ENCODE measurements at regions of chr4 and their contacts with region 1.

Region 1: DNA sequence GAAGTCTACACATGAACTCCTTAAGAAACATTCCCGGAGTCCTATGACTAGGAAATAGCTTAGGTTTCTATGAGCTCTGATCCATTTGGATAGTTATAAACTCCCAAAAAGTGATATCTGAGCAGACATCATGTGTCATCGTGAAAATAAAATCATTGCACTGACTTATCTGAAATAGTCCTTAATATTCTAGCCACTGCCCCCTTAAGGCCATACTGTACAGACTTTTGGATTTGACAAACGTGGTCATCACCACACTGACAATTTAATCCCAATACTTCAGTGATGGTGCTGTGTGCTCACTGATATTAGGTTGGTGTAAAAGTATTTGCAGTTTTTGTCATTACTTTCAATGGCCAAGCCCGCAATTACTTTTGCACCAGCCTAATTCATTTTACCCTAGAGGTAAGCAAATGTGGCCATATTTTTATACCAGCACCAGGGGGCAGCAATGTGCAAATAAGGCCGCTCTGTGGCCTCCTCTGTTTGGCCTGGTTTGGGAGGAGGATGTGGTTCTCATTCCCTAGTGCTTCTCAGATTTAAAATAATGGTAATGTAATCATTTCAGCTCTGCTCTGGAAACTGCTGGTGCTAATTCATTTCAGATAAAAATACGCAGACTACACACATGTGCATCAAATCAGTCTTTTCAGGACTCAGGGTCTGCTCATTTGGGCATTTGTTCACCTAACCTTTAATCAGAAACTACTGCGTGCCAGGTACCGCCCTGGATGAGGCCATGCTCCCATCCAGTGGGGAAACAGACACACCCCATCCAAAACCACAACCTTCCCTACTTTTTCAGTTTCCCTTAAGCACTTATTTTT is 196.4 kb upstream of the C1QTNF7 start:
- DNase-seq: no peak
- H3K4me3 ChIP-seq: no peak overlapping the region
- H3K27ac ChIP-seq: peak overlapping the region; percentile 22
- H3K4me1 ChIP-seq: peaks cover 42% of the 10 kb centered on the region
- H3K27me3 ChIP-seq: no peaks in the 10 kb centered on the region
- CTCF ChIP-seq: peak; percentile 44 to 78 (median 66)
- POLR2A ChIP-seq: no peak

Region 2: GRCh38 chr4:15132739-15133138 is 98.7 kb before region 1 on chr4:
- intact Hi-C with region 1: no loop called
- DNase-seq: no peak
- H3K4me3 ChIP-seq: no peak overlapping the region
- H3K27ac ChIP-seq: no peak overlapping the region
- H3K4me1 ChIP-seq: no peaks in the 10 kb centered on the region
- H3K27me3 ChIP-seq: no peaks in the 10 kb centered on the region
- CTCF ChIP-seq: no peak
- POLR2A ChIP-seq: no peak

Region 3: DNA sequence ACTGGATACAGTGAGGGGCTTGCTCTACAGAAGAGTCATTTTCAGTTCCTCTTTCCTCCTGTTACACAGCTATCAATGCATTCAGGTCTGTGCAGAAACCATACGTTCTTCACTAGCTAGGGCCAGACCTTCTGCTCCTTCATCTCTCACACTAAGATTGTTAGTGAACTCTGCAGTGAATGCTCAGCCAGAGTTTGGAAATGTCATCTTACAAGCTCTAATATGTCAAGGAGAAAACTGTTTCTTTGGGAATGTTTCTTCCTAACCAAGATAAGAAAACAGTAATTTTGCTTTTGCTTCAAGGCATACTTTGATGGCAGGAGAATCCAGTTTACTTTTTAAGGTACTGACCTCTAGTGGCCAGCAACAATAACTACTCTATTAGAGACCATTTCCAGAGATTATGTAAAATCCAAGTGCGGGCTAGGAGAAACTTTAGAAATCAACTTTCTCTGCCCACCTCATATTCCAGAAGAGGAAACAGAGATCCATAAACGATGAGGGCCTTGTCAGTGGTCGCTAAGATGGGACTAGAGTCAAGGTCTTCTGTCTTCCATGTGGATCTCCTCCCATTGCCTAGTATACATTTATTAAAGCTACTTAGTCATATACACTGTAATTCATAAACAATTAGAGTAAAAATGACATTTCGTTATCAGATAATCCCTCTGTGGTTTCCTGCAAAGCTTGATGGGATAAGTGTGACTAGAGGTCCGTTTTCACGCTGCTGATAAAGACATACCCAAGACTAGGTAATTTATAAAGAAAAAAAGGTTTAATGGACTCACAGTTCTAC is 226.1 kb after region 1 on chr4:
- intact Hi-C with region 1: loop called (anchors 2 kb)
- DNase-seq: no peak
- H3K4me3 ChIP-seq: no peak overlapping the region
- H3K27ac ChIP-seq: peak overlapping the region; percentile 65
- H3K4me1 ChIP-seq: peaks cover 29% of the 10 kb centered on the region
- H3K27me3 ChIP-seq: no peaks in the 10 kb centered on the region
- CTCF ChIP-seq: peak; percentile 54 to 78 (median 69)
- POLR2A ChIP-seq: no peak

Measured in vagina (tissue), 2 donors.